Calu3 (cell line): ENCODE measurements at regions of chr3 and their contacts with region 1.

Region 1: GRCh38 chr3:177050501-177051237 is 146.6 kb downstream of the TBL1XR1 start:
- DNase-seq: peak; percentile 21
- H3K4me3 Mint-ChIP-seq: no peak overlapping the region
- H3K27ac Mint-ChIP-seq: no peak overlapping the region
- H3K4me1 Mint-ChIP-seq: no peaks in the 10 kb centered on the region
- H3K27me3 Mint-ChIP-seq: no peaks in the 10 kb centered on the region
- CTCF ChIP-seq: peak; percentile 77

Region 2: DNA sequence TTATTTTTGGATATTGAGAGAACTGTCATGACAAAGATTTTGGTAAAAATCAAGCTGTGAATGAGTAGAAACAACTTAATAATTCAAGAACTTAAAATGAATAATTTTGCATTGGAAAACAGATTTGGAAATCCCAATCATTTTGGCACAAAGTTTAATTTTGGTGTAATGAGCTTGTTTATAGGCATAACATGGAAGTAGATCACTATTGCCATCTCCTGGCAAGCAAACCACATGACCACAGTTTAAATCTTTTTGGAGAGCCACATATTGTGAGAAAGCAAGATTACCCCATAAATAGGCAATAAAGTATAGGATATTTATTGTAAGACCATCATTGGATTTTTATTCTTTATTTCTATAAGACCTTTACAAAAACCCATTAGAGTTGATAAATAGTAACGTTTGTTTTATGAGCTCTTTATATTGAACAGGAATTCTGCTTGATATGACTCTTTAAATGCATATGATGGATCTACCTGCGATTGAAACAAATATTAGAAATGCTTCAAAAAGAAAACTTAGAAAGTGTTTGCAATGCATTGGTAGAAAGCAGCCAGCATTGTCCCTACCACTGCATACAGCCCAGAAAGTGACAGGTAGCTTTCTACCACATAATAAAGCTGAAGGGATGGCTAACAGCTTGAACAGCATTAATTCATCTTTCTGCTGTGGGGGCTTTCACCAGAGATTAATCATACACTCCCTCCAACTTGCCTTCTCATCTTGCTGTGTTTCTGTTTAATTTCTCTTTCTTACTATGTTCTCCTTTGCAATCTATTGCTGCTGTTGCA is 620.2 kb before region 1 on chr3:
- CTCF ChIA-PET with region 1: no interaction called
- intact Hi-C with region 1: no loop called
- DNase-seq: peak; percentile 24
- H3K4me3 Mint-ChIP-seq: no peak overlapping the region
- H3K27ac Mint-ChIP-seq: no peak overlapping the region
- H3K4me1 Mint-ChIP-seq: peaks cover 10% of the 10 kb centered on the region
- H3K27me3 Mint-ChIP-seq: no peaks in the 10 kb centered on the region
- CTCF ChIP-seq: peak; percentile 60

Region 3: DNA sequence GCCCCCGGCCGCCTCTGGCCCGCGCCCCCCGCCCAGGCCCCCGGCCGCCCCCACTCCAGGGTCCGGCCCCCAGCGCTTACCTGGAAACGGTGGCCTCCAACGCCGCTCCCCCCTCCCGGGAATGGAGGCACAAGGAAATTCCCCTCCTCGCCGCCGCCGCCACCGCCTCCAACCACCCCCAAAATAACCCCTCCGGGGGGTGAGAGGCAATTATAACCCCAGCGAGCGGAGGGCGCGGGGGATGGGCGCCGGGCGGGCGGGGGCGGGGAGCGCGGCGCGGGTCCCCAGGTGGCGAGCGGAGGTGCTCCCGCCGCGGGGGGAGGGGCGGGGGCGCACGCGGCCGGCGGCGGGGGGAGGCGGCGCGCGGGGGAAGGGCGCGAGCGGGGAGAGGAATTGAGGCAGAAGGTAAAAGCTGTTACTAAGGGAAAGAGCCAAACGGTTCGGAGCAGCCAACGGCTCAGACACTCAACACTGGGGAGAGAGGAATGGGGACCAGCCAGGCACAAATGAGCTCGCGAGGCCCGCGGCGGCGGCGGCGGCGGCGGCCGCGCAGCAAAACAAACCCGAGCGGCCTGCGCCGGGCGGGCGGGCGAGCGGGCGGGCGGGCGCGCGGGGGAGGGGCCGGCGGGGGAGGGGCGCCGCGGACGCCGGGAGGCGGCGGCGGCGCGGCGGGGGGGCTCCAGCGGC is 146.5 kb after region 1 on chr3 and contains the start of gene TBL1XR1:
- CTCF ChIA-PET with region 1: interaction called, 10 read pairs
- intact Hi-C with region 1: loop called (anchors 2 kb)
- DNase-seq: peak; percentile 94
- H3K4me3 Mint-ChIP-seq: peak within 1 kb of the TSS; percentile 70
- H3K27ac Mint-ChIP-seq: peak within 1 kb of the TSS; percentile 71
- H3K4me1 Mint-ChIP-seq: peaks cover 32% of the 10 kb centered on the region
- H3K27me3 Mint-ChIP-seq: no peaks in the 10 kb centered on the region
- CTCF ChIP-seq: no peak
- total RNA-seq, gene TBL1XR1: 199 and 206 TPM in 2 replicates

Region 4: GRCh38 chr3:177478170-177478860 is 427.6 kb after region 1 on chr3:
- CTCF ChIA-PET with region 1: interaction called, 5 read pairs
- intact Hi-C with region 1: loop called (anchors 2 kb)
- DNase-seq: peak; percentile 77
- H3K4me3 Mint-ChIP-seq: peak overlapping the region; percentile 16
- H3K27ac Mint-ChIP-seq: peak overlapping the region; percentile 4
- H3K4me1 Mint-ChIP-seq: peaks cover 39% of the 10 kb centered on the region
- H3K27me3 Mint-ChIP-seq: no peaks in the 10 kb centered on the region
- CTCF ChIP-seq: no peak

Region 5: DNA sequence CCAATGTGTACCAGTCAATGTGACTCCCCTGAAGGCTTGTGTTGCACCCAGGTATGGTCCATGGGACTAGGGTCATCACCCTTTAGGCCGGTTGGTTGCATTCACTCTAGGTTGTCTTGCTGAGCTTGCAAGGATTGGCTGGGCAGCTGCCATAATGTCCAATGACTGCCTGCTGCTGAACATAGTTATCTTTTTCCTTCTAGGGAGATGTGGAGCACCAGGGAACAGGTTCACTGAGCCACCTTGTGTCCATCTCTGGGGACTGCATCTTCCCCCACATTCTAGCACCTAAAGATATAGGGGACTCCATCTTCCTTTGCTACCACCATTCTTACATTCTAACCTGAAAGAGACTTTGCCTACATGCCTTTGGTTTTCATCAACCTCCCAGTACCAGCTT is 727.0 kb after region 1 on chr3:
- CTCF ChIA-PET with region 1: no interaction called
- intact Hi-C with region 1: loop called (anchors 1 kb)
- DNase-seq: peak; percentile 75
- H3K4me3 Mint-ChIP-seq: no peak overlapping the region
- H3K27ac Mint-ChIP-seq: no peak overlapping the region
- H3K4me1 Mint-ChIP-seq: peaks cover 12% of the 10 kb centered on the region
- H3K27me3 Mint-ChIP-seq: no peaks in the 10 kb centered on the region
- CTCF ChIP-seq: peak; percentile 95

Region 6: GRCh38 chr3:178325330-178325729 is 1274.7 kb after region 1 on chr3:
- CTCF ChIA-PET with region 1: interaction called, 3 read pairs
- intact Hi-C with region 1: loop called (anchors 2 kb)
- DNase-seq: no peak
- H3K4me3 Mint-ChIP-seq: no peak overlapping the region
- H3K27ac Mint-ChIP-seq: no peak overlapping the region
- H3K4me1 Mint-ChIP-seq: no peaks in the 10 kb centered on the region
- H3K27me3 Mint-ChIP-seq: no peaks in the 10 kb centered on the region
- CTCF ChIP-seq: no peak